ENCODE measurements at regions of chr1 and their contacts with region 1.

Region 1: GRCh38 chr1:98053471-98054366 is 132.9 kb upstream of the DPYD start:
- DNase-seq: peak; percentile 47
- H3K4me3 Mint-ChIP-seq: peak overlapping the region; percentile 58
- H3K27ac Mint-ChIP-seq: no peak overlapping the region
- H3K4me1 Mint-ChIP-seq: peaks cover 27% of the 10 kb centered on the region
- H3K27me3 Mint-ChIP-seq: peaks cover 86% of the 10 kb centered on the region

Region 2: GRCh38 chr1:97186404-97186803 is 867.3 kb before region 1 on chr1:
- intact Hi-C with region 1: loop called (anchors 2 kb)
- DNase-seq: no peak
- H3K4me3 Mint-ChIP-seq: no peak overlapping the region
- H3K27ac Mint-ChIP-seq: no peak overlapping the region
- H3K4me1 Mint-ChIP-seq: no peaks in the 10 kb centered on the region
- H3K27me3 Mint-ChIP-seq: no peaks in the 10 kb centered on the region

Region 3: DNA sequence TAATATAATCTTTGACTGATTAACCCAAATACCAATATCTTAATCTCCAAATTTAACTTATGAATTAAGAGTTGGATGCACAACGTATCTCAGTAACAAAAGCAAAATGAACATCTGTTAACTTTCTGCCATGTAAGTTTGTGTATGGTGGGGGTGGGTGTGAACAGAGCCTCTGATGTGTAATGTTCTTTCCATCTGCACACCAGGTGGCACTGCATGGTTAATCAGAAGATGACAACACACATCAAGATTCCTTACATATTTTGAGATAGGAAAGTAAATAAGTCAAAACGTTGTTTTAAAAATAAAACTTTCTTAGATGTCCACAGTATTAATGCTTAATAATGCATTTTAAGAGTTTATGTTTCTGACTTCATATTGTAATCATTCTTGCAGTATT is 384.8 kb before region 1 on chr1:
- intact Hi-C with region 1: loop called (anchors 2 kb)
- DNase-seq: no peak
- H3K4me3 Mint-ChIP-seq: no peak overlapping the region
- H3K27ac Mint-ChIP-seq: no peak overlapping the region
- H3K4me1 Mint-ChIP-seq: no peaks in the 10 kb centered on the region
- H3K27me3 Mint-ChIP-seq: no peaks in the 10 kb centered on the region

Region 4: DNA sequence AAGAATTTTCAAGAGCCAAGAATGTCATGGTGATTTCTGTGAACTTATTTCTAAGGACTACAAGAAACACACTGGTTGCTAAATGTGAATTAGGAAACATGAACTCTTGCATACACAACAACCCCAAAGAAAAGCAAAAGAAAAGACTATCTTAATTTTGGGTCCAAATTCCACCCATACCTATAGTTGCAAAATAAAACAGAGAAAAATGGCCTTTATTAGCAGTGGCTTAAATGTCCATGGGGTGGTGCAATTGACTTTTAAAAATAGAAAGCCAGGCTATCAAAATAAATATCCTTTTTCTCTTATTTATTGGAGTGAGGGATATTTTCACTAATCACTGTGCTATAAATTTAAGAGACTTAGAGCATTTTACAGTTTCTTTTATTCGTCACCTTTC is 52.0 kb before region 1 on chr1:
- intact Hi-C with region 1: loop called (anchors 5 kb)
- DNase-seq: no peak
- H3K4me3 Mint-ChIP-seq: no peak overlapping the region
- H3K27ac Mint-ChIP-seq: no peak overlapping the region
- H3K4me1 Mint-ChIP-seq: no peaks in the 10 kb centered on the region
- H3K27me3 Mint-ChIP-seq: peaks cover 26% of the 10 kb centered on the region